ENCODE measurements at regions of chr14 and their contacts with region 1.

Region 1: DNA sequence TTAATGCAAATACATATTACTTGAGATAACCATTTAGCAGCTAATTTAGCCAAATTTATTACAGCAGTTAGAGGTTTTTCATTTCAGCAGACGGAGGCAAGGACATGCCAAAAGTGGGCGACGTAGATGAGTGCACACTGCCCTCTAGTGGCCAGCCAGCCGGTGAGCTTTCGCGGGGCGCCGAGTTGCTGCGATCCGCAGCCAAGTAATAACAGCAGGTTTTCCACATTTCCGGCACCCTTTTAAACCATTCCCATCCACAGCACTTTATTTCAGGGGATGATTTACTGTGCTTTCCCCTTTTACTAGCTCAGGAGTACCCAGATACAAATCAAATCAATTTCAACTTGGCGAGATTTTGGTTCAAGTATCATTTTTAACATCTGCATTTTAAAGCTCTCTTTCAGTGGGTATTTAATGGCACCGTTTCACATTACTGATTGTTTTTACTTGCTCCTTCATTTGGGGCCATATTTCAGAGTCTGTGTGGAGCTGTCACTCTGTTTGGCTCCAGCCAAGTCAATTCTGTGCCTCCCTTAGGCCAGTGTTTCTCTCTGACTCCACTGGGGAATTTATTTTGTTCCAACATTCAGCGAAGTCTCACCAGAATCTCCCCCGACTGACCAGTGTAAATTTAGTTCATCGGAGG is 158.0 kb downstream of the EGLN3 start:
- DNase-seq: peak; percentile 72
- ATAC-seq: peak; percentile 96
- H3K4me3 ChIP-seq: no peak overlapping the region
- H3K27ac ChIP-seq: no peak overlapping the region
- H3K4me1 ChIP-seq: 0 out of 2 replicates have a peak, but pooled peaks cover 4% of the 10 kb centered on the region
- H3K27me3 ChIP-seq: peaks cover 0 to 11% of the 10 kb centered on the region in 2 experiments; a peak in 2 of 5 replicates
- CTCF ChIP-seq: peak; percentile 97
- EP300 ChIP-seq: no peak
- POLR2A ChIP-seq: no peak
- RAD21 ChIP-seq: peak; percentile 94

Region 2: DNA sequence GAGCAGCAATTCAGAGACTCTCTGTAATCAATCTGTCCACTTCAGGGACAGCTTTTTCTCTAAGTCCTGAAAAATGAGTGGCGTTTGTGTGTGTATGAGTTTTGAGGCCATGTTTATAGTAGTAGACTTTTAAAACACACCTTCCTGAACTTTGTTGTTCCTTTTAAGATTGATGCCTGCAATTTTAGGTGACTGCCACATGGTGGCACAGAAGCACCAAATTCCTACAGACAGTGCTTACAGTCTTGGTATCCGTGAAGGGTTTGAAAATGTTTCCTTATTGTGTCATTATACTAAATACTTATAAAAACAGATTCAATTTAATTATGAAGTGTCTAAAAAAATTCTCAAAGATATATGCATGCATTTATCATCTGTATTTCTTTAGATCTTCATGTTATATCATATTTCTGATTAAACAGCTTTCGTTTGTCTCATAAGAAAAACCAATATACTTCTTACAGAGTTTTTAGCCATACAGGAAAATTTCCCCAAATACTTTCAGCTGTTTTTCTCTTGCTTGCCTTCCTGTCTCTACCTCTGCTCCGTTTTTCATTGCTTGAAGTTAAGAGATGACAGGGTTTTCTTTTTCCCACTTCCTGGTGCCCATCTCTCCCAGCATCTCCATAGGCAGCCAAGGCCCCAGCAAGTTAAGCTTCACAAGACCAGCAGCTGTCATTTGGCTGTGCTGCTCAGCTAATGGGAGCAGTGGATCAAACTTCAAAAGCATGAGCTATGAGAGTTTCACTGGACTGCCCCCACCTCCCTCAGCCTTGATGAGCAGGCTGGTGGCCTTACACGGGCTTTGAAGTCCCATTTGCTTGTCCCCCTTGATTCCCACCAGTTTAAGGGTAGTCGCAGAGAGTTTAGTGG is 1204.2 kb before region 1 on chr14:
- CTCF ChIA-PET with region 1: interaction called, 37 read pairs
- POLR2A ChIA-PET with region 1: no interaction called
- in situ Hi-C with region 1: no loop called
- intact Hi-C with region 1: loop called (anchors 1 kb)
- DNase-seq: peak; percentile 43
- ATAC-seq: peak; percentile 79
- H3K4me3 ChIP-seq: no peak overlapping the region
- H3K27ac ChIP-seq: no peak overlapping the region
- H3K4me1 ChIP-seq: no peaks in the 10 kb centered on the region
- H3K27me3 ChIP-seq: no peaks in the 10 kb centered on the region
- CTCF ChIP-seq: peak; percentile 88
- EP300 ChIP-seq: no peak
- POLR2A ChIP-seq: no peak
- RAD21 ChIP-seq: no peak; the same call in 1 of the 2 replicates

Region 3: GRCh38 chr14:32710731-32711680 is 1081.8 kb before region 1 on chr14:
- CTCF ChIA-PET with region 1: interaction called, 41 read pairs
- POLR2A ChIA-PET with region 1: no interaction called
- in situ Hi-C with region 1: loop called (anchors 5 kb)
- intact Hi-C with region 1: loop called (anchors 1 kb)
- DNase-seq: peak; percentile 62
- ATAC-seq: peak; percentile 94
- H3K4me3 ChIP-seq: no peak overlapping the region
- H3K27ac ChIP-seq: no peak overlapping the region
- H3K4me1 ChIP-seq: no peaks in the 10 kb centered on the region
- H3K27me3 ChIP-seq: no peaks in the 10 kb centered on the region
- CTCF ChIP-seq: peak; percentile 79
- EP300 ChIP-seq: no peak
- POLR2A ChIP-seq: no peak
- RAD21 ChIP-seq: no peak

Region 4: DNA sequence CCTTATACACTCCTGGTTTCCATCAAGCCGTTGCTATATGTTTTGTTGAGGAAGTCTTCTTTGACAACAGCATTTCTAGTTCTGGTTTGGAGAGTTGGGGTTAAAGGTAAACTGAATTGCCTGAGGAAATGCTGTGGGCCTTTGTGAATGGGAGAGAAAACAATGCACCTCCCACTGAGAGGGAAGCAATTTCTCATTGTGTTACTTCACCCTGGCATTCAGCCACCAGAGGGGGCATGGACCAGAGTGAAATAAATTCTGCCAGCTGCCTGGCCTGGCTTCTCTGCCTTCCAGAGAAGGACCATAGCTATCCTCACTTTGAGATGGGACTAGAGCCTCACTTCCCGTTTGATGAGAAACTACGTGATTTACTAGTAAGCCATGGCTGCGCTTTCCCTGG is 317.2 kb before region 1 on chr14:
- CTCF ChIA-PET with region 1: interaction called, 15 read pairs
- POLR2A ChIA-PET with region 1: no interaction called
- in situ Hi-C with region 1: loop called (anchors 5 kb)
- intact Hi-C with region 1: loop called (anchors 1 kb)
- DNase-seq: peak; percentile 58
- ATAC-seq: peak; percentile 94
- H3K4me3 ChIP-seq: no peak overlapping the region
- H3K27ac ChIP-seq: no peak overlapping the region
- H3K4me1 ChIP-seq: no peaks in the 10 kb centered on the region
- H3K27me3 ChIP-seq: no peaks in the 10 kb centered on the region
- CTCF ChIP-seq: peak; percentile 70
- EP300 ChIP-seq: no peak
- POLR2A ChIP-seq: no peak
- RAD21 ChIP-seq: no peak; the same call in 1 of the 2 replicates